ENCODE measurements at regions of chr2 and their contacts with region 1.

Region 1: DNA sequence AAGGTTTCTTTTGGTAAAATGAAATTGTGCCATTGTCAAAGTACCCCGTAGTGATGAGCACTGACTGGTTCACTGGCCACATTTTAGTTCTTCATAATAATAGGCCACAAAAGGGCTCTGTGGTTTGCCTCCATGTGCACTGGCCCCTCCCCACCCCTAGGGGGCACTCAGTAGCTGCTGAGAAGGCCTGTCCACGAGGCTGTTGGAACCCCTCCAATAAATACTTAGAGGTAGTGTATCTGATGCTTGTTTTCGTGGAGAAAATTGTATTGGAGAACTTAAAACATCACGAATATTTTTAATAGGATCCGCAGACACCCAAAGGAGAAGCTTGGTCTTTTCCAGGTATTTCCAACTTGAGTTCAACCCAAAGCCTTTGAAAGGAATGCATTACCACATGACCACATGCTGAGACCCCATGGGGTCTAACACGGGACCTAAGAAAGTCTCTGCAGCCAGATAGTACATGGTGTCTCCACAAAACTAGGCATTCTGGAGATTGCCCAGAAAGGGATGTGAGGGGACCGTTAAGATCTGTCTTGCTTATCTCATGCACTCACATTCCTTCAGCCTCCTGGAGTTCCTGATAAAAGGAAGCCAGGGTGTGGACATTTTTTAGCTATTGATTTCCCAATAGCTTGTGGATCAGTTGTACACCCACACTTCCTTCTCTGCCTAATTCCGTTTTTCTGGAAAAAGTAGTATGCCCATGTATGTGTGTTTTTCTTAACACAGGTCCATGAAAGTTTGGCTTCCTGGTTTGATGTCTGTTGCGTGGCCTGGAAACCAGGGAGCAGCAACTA is 28.5 kb upstream of the NOSTRIN start:
- DNase-seq: peak; percentile 16 to 55
- ATAC-seq: peak; percentile 54 to 81
- H3K4me3 ChIP-seq: no peak overlapping the region
- H3K27ac ChIP-seq: no peak overlapping the region
- H3K4me1 ChIP-seq: no peaks in the 10 kb centered on the region
- H3K27me3 ChIP-seq: no peaks in the 10 kb centered on the region
- CTCF ChIP-seq: peak; percentile 79 to 89 (median 85)
- POLR2A ChIP-seq: no peak

Region 2: GRCh38 chr2:168849610-168850009 is 75.7 kb after region 1 on chr2:
- in situ Hi-C with region 1: no loop called
- intact Hi-C with region 1: loop called (anchors 2 kb)
- DNase-seq: no peak
- ATAC-seq: no peak
- H3K4me3 ChIP-seq: no peak overlapping the region
- H3K27ac ChIP-seq: no peak overlapping the region
- H3K4me1 ChIP-seq: peaks cover 10 to 16% of the 10 kb centered on the region in 2 donors
- H3K27me3 ChIP-seq: no peaks in the 10 kb centered on the region
- CTCF ChIP-seq: peak in 2 of 5 experiments; percentile 27 to 39
- POLR2A ChIP-seq: no peak

Region 3: GRCh38 chr2:168912901-168913369 is 139.0 kb after region 1 on chr2:
- in situ Hi-C with region 1: loop called (anchors 5 to 10 kb)
- intact Hi-C with region 1: no loop called
- DNase-seq: peak; percentile 68 to 88
- ATAC-seq: peak; percentile 85 to 94
- H3K4me3 ChIP-seq: peak overlapping the region; percentile 35 to 40 (median 40)
- H3K27ac ChIP-seq: peak overlapping the region; percentile 27 to 74 (median 62)
- H3K4me1 ChIP-seq: peaks cover 0 to 12% of the 10 kb centered on the region in 2 donors
- H3K27me3 ChIP-seq: no peaks in the 10 kb centered on the region
- CTCF ChIP-seq: no peak
- POLR2A ChIP-seq: no peak

Region 4: GRCh38 chr2:168920504-168921157 is 146.7 kb after region 1 on chr2:
- in situ Hi-C with region 1: loop called (anchors 5 to 10 kb)
- intact Hi-C with region 1: loop called (anchors 1 kb)
- DNase-seq: no peak
- ATAC-seq: peak; percentile 33 to 72
- H3K4me3 ChIP-seq: no peak overlapping the region
- H3K27ac ChIP-seq: no peak overlapping the region
- H3K4me1 ChIP-seq: peaks cover 0 to 3% of the 10 kb centered on the region in 2 donors
- H3K27me3 ChIP-seq: no peaks in the 10 kb centered on the region
- CTCF ChIP-seq: peak; percentile 50 to 73 (median 67)
- POLR2A ChIP-seq: no peak

Region 5: GRCh38 chr2:169131587-169132512 is 357.9 kb after region 1 on chr2:
- in situ Hi-C with region 1: no loop called
- intact Hi-C with region 1: loop called (anchors 5 kb)
- DNase-seq: no peak
- ATAC-seq: peak; percentile 39 to 46
- H3K4me3 ChIP-seq: no peak overlapping the region
- H3K27ac ChIP-seq: no peak overlapping the region
- H3K4me1 ChIP-seq: no peaks in the 10 kb centered on the region
- H3K27me3 ChIP-seq: no peaks in the 10 kb centered on the region
- CTCF ChIP-seq: peak in 4 of 5 experiments; percentile 61 to 78 (median 70)
- POLR2A ChIP-seq: no peak

Measured in gastrocnemius medialis (tissue), 4 donors.